ENCODE measurements at regions of chr17 and their contacts with region 1.

Region 1: GRCh38 chr17:29640413-29640812 is 17.7 kb upstream of the CORO6 start:
- DNase-seq: peak; percentile 79 to 81
- ATAC-seq: peak; percentile 35 to 41
- H3K4me3 ChIP-seq: peak overlapping the region; percentile 37 to 49 (median 41)
- H3K27ac ChIP-seq: peak overlapping the region; percentile 97 to 100 (median 98)
- H3K4me1 ChIP-seq: peaks cover 62 to 82% of the 10 kb centered on the region in 2 donors
- H3K27me3 ChIP-seq: no peaks in the 10 kb centered on the region
- CTCF ChIP-seq: no peak
- POLR2A ChIP-seq: peak; percentile 58 to 77

Region 2: GRCh38 chr17:29393451-29393850 is 247.0 kb before region 1 on chr17:
- in situ Hi-C with region 1: no loop called
- intact Hi-C with region 1: no loop called
- DNase-seq: no peak
- ATAC-seq: no peak
- H3K4me3 ChIP-seq: no peak overlapping the region
- H3K27ac ChIP-seq: peak overlapping the region in 3 of 4 donors; percentile 11 to 29 (median 12)
- H3K4me1 ChIP-seq: peaks cover 35 to 38% of the 10 kb centered on the region in 2 donors
- H3K27me3 ChIP-seq: no peaks in the 10 kb centered on the region
- CTCF ChIP-seq: no peak
- POLR2A ChIP-seq: no peak

Region 3: DNA sequence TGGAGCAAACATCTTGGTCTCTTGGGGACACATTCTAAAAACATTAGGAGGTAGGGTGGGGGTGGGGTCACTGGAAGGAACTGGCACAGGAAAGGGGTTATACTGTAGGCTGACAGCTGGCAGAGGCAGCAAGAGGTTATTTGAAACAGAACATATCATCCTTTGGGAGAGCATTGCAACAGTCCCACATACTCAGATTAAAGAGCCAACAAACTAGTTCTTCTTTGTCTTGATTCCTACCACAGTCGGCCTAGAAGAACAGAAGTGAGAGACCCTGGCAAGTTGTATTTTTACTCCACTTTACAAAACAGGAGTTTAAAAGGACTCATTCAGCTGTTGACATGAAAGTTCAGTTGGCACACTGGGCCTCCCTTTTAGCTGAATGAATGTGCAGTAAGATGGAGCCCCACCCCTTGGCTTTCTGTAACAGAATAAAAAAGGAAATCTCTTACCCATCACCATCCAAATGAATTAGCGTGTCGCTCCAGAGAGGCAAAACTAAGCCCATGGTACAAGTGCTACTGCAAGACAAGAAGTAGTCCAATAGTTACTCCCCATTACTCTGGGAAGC is 36.9 kb after region 1 on chr17:
- in situ Hi-C with region 1: no loop called
- intact Hi-C with region 1: loop called (anchors 2 kb)
- DNase-seq: peak; percentile 89 to 94
- ATAC-seq: peak; percentile 89 to 91
- H3K4me3 ChIP-seq: peak overlapping the region; percentile 14 to 67 (median 49)
- H3K27ac ChIP-seq: peak overlapping the region; percentile 97 to 100 (median 98)
- H3K4me1 ChIP-seq: peaks cover 56 to 60% of the 10 kb centered on the region in 2 donors
- H3K27me3 ChIP-seq: no peaks in the 10 kb centered on the region
- CTCF ChIP-seq: no peak
- POLR2A ChIP-seq: peak; percentile 18 to 41

Region 4: GRCh38 chr17:29740017-29740416 is 99.6 kb after region 1 on chr17:
- in situ Hi-C with region 1: no loop called
- intact Hi-C with region 1: loop called (anchors 1 kb)
- DNase-seq: no peak
- ATAC-seq: peak in 1 of 2 donors; percentile 9
- H3K4me3 ChIP-seq: peak overlapping the region in 1 of 4 donors; percentile 3
- H3K27ac ChIP-seq: peak overlapping the region; percentile 91 to 97 (median 94)
- H3K4me1 ChIP-seq: peaks cover 53 to 61% of the 10 kb centered on the region in 2 donors
- H3K27me3 ChIP-seq: no peaks in the 10 kb centered on the region
- CTCF ChIP-seq: no peak
- POLR2A ChIP-seq: no peak

Region 5: DNA sequence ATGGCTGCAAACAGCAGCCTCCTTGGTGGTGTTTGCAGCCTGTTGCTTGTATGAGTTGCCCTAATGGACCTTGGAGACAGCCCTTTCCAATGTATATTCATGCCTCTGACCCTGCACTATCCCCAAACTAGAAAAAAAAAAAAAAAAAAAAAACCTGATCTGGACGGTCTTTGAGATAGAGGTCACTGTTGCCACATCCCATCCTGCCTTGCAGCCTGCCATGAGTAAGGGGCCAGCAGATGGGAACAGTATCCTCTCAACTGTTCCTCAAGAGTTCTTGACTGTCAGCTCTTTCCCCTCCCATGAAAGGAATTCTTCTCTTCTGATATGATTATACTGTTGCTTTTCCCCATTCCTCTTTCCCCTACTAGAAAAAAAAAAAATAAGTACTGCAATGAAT is 137.2 kb after region 1 on chr17:
- in situ Hi-C with region 1: loop called in 2 of 4 experiments (anchors 10 kb)
- intact Hi-C with region 1: loop called (anchors 1 kb)
- DNase-seq: no peak
- ATAC-seq: no peak
- H3K4me3 ChIP-seq: no peak overlapping the region
- H3K27ac ChIP-seq: peak overlapping the region in 1 of 4 donors; percentile 84
- H3K4me1 ChIP-seq: peaks cover 9 to 13% of the 10 kb centered on the region in 2 donors
- H3K27me3 ChIP-seq: no peaks in the 10 kb centered on the region
- CTCF ChIP-seq: no peak
- POLR2A ChIP-seq: no peak

Measured in gastrocnemius medialis (tissue), 4 donors.